HepG2 (cell line): ENCODE measurements at regions of chr12 and their contacts with region 1.

Region 1: GRCh38 chr12:62435303-62436163 is 31.1 kb upstream of the MON2 start:
- DNase-seq: peak; percentile 58
- ATAC-seq: peak; percentile 97
- H3K4me3 ChIP-seq: peak overlapping the region; percentile 56 to 78 (median 73)
- H3K27ac ChIP-seq: no peak overlapping the region
- H3K4me1 ChIP-seq: peaks cover 15% of the 10 kb centered on the region
- H3K27me3 ChIP-seq: no peaks in the 10 kb centered on the region; a peak in 1 of 5 replicates
- CTCF ChIP-seq: peak; percentile 63
- EP300 ChIP-seq: no peak
- POLR2A ChIP-seq: no peak
- RAD21 ChIP-seq: no peak

Region 2: GRCh38 chr12:62466594-62467491 is 31.3 kb after region 1 on chr12 and contains the start of gene MON2:
- CTCF ChIA-PET with region 1: no interaction called
- POLR2A ChIA-PET with region 1: interaction called, 8 read pairs
- in situ Hi-C with region 1: no loop called
- intact Hi-C with region 1: loop called (anchors 2 kb)
- DNase-seq: peak; percentile 73
- ATAC-seq: peak; percentile 99
- H3K4me3 ChIP-seq: peak within 1 kb of the TSS; percentile 81 to 98 (median 85)
- H3K27ac ChIP-seq: peak within 1 kb of the TSS; percentile 77
- H3K4me1 ChIP-seq: peaks cover 19% of the 10 kb centered on the region
- H3K27me3 ChIP-seq: no peaks in the 10 kb centered on the region; a peak in 1 of 5 replicates
- CTCF ChIP-seq: no peak
- EP300 ChIP-seq: no peak; a peak in 1 of 4 replicates
- POLR2A ChIP-seq: peak; percentile 90 to 91
- RAD21 ChIP-seq: no peak
- total RNA-seq, gene MON2: 24.8 and 34.0 TPM in 2 replicates

Region 3: GRCh38 chr12:62500042-62500441 is 64.5 kb after region 1 on chr12:
- CTCF ChIA-PET with region 1: no interaction called
- POLR2A ChIA-PET with region 1: no interaction called
- in situ Hi-C with region 1: no loop called
- intact Hi-C with region 1: no loop called
- DNase-seq: no peak
- ATAC-seq: no peak
- H3K4me3 ChIP-seq: no peak overlapping the region
- H3K27ac ChIP-seq: no peak overlapping the region
- H3K4me1 ChIP-seq: no peaks in the 10 kb centered on the region
- H3K27me3 ChIP-seq: no peaks in the 10 kb centered on the region
- CTCF ChIP-seq: no peak
- EP300 ChIP-seq: no peak
- POLR2A ChIP-seq: no peak
- RAD21 ChIP-seq: no peak

Region 4: DNA sequence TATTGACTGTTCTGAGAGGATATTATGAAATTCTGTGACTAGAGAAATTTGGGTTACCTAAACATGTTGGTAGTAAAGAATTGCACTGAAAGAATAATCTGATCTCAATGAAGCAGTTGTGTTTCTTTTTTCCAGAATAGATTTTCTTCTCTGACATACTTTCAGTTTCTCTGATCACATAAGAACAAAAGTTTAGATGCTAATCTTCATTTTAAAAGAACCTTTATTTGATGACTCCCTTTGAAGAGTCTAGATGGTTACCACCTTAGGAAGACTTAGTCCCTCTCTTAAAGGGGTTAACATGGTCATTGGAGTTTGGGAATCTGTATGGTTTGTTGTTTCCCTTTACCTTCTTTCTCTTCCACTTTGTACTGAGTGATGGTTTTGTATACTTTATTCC is 89.7 kb after region 1 on chr12:
- CTCF ChIA-PET with region 1: no interaction called
- POLR2A ChIA-PET with region 1: no interaction called
- in situ Hi-C with region 1: no loop called
- intact Hi-C with region 1: loop called (anchors 5 kb)
- DNase-seq: no peak
- ATAC-seq: no peak
- H3K4me3 ChIP-seq: no peak overlapping the region
- H3K27ac ChIP-seq: no peak overlapping the region
- H3K4me1 ChIP-seq: peaks cover 10% of the 10 kb centered on the region
- H3K27me3 ChIP-seq: no peaks in the 10 kb centered on the region
- CTCF ChIP-seq: no peak
- EP300 ChIP-seq: no peak
- POLR2A ChIP-seq: no peak
- RAD21 ChIP-seq: no peak

Region 5: GRCh38 chr12:62575036-62575435 is 139.5 kb after region 1 on chr12:
- CTCF ChIA-PET with region 1: no interaction called
- POLR2A ChIA-PET with region 1: no interaction called
- in situ Hi-C with region 1: no loop called
- intact Hi-C with region 1: loop called (anchors 10 kb)
- DNase-seq: no peak
- ATAC-seq: no peak
- H3K4me3 ChIP-seq: no peak overlapping the region
- H3K27ac ChIP-seq: no peak overlapping the region
- H3K4me1 ChIP-seq: no peaks in the 10 kb centered on the region
- H3K27me3 ChIP-seq: no peaks in the 10 kb centered on the region
- CTCF ChIP-seq: no peak
- EP300 ChIP-seq: no peak
- POLR2A ChIP-seq: no peak
- RAD21 ChIP-seq: no peak

Region 6: DNA sequence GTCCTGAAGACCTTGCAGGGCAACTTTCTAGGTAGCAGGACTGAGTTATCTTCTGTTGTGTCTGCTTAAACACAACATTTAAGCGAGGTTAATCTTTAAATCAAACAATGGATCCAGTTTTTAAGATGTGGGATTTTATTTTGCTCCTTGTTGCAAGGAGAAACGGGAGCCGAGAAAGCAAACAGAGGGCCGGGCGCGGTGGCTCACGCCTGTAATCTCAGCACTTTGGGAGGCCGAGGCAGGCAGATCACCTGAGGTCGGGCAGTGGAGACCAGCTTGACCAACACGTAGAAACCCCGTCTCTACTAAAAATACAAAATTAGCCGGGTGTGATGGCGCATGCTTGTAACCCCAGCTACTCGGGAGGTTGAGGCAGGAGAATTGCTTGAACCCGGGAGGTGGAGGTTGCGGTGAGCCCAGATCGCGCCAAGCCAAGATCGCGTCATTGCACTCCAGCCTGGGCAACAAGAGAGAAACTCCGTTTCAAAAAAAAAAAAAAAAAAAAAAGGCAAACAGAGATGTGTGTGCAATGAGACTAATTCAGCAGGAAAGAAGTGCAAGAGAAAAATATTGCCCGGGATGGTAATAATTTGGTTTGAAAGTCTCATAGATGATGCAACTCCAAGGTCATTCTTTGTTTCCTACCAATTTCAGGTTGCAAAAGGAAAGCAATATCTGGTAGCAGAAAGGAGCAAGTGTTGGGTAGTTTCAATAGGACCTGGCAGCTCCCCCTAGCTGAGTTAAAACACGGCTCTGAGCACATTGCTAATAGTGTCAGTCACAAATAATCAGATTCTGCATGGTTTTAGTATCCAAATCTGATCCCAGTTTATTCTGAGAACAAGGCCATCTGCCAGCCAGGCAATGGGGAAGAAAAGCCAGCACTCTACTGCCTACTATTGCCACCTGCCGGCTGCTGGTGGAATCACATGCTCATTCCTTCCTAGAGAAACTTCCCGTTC is 358.0 kb after region 1 on chr12:
- CTCF ChIA-PET with region 1: interaction called, 10 read pairs
- POLR2A ChIA-PET with region 1: no interaction called
- in situ Hi-C with region 1: loop called (anchors 10 kb)
- intact Hi-C with region 1: loop called (anchors 1 kb)
- DNase-seq: peak; percentile 51
- ATAC-seq: peak; percentile 59
- H3K4me3 ChIP-seq: no peak overlapping the region
- H3K27ac ChIP-seq: no peak overlapping the region
- H3K4me1 ChIP-seq: peaks cover 13% of the 10 kb centered on the region
- H3K27me3 ChIP-seq: no peaks in the 10 kb centered on the region
- CTCF ChIP-seq: peak; percentile 85
- EP300 ChIP-seq: no peak
- POLR2A ChIP-seq: no peak
- RAD21 ChIP-seq: peak; percentile 58

Region 7: GRCh38 chr12:62799126-62799736 is 363.7 kb after region 1 on chr12:
- CTCF ChIA-PET with region 1: interaction called, 10 read pairs
- POLR2A ChIA-PET with region 1: no interaction called
- in situ Hi-C with region 1: loop called (anchors 10 kb)
- intact Hi-C with region 1: loop called (anchors 1 kb)
- DNase-seq: peak; percentile 56
- ATAC-seq: peak; percentile 90
- H3K4me3 ChIP-seq: no peak overlapping the region
- H3K27ac ChIP-seq: no peak overlapping the region
- H3K4me1 ChIP-seq: no peaks in the 10 kb centered on the region
- H3K27me3 ChIP-seq: no peaks in the 10 kb centered on the region
- CTCF ChIP-seq: peak; percentile 80
- EP300 ChIP-seq: no peak
- POLR2A ChIP-seq: no peak
- RAD21 ChIP-seq: peak; percentile 69

Region 8: DNA sequence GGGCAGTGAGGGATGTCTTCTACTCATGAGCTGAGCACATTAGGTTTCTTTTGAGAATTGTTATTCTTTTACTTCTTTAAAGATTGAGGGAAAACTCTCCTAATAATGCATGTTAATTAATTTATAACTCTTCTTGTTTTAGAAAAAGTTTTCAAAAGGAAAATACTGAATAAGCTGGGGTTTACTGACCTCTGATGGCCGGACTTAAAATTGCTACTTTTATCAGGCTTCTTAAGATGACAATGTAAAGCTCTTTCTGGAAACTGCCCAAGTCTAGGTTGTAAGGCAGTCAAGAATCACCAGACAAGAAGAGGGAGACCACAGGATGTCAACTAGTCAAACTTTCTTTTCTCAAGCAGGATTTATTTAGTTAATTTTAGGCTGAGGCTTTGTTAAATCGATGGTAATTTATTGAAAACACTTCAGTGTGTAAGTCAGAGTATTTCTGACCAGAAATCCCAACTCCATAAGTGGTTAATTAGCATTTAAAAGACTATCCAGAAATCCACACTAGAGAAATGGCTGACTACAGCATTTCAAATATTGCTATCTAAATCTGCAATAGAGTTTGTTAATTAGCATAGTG is 633.4 kb after region 1 on chr12:
- CTCF ChIA-PET with region 1: no interaction called
- POLR2A ChIA-PET with region 1: no interaction called
- in situ Hi-C with region 1: no loop called
- intact Hi-C with region 1: loop called (anchors 2 kb)
- DNase-seq: peak; percentile 33
- ATAC-seq: no peak
- H3K4me3 ChIP-seq: no peak overlapping the region
- H3K27ac ChIP-seq: no peak overlapping the region
- H3K4me1 ChIP-seq: peaks cover 7% of the 10 kb centered on the region
- H3K27me3 ChIP-seq: no peaks in the 10 kb centered on the region
- CTCF ChIP-seq: peak; percentile 58
- EP300 ChIP-seq: no peak
- POLR2A ChIP-seq: no peak
- RAD21 ChIP-seq: no peak